CD4-positive, alpha-beta T cell (primary cell): ENCODE measurements at regions of chrX and their contacts with region 1.

Region 1: DNA sequence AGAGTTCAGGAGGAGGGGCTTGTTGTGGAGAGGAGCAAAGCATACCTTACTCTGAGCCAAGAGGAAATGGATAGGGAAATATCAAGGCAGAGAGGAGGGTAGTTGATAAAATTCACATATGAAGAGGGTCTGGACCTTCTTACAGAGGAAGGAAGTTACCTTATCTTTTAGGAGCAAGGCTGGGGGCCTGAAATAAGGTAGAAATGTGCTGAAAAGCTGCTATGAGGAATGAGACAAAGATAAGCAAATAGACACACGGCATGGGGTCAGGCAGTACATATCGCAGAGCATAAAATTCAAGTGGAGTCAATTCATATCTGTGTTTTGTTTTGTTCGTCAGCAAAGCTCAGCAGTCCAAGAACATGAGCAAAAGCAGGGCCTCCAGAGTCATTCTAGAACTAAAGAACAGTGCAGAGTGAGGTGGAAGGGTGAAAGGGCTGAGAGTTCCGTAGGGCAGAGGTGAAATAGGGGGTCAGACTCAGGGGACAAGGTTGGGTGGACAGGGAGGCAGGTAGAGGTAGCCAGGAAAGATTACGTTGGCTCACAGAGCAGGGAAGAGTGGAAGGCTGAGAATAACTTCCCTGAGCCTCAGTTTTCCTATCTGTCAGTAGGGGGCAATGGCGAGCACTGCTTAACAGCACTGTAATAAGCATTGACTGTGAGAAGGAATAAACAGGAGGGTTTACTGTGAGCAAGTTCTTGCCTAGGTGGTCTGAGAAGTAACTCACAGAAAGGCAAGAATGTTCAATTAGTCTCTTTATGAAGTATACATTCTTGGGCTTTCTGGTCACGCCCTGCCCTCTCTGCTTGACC is 9.2 kb downstream of the VSIG4 start:
- DNase-seq: peak in 4 of 14 experiments; percentile 45 to 60 (median 56)
- ATAC-seq: peak; percentile 59
- H3K4me3 ChIP-seq: no peak overlapping the region
- H3K4me3 Mint-ChIP-seq: no peak overlapping the region
- H3K27ac ChIP-seq: no peak overlapping the region
- H3K27ac Mint-ChIP-seq: no peak overlapping the region
- H3K4me1 ChIP-seq: peaks cover 6% of the 10 kb centered on the region
- H3K4me1 Mint-ChIP-seq: peaks cover 4% of the 10 kb centered on the region
- H3K27me3 ChIP-seq: no peaks in the 10 kb centered on the region
- H3K27me3 Mint-ChIP-seq: no peaks in the 10 kb centered on the region
- CTCF ChIP-seq: peak; percentile 51

Region 2: DNA sequence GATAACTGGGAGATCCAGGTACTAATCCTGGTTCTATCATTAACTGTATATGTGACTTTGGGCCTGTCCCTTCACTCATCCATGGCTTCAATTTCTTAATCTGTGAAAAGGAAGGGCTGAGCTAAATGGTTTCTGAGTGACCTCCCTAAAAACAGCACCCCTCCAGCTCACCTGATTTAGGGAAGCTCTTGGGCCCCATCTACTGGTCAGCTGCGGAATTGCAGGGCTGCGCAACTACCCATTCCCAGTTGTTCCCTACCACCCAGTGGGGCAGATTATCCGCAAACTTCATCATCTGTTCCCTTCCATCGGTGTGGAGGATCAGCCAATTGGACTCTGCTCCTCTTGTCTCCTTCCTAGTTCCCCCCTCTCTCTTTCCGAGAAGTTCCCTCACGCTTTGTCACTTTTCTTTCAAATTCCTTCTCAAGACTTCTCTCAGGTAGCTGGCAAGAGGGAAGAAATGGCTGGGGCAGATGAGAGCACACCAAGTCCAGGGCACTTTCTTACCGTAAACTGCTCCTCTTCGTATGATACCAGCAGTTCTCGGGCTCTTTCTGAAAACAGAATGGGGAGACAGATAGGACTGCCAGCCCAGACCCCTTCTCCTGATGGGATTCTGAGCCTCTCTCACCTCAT is 501.9 kb before region 1 on chrX:
- CTCF ChIA-PET with region 1: no interaction called
- POLR2A ChIA-PET with region 1: no interaction called
- intact Hi-C with region 1: no loop called
- DNase-seq: peak; percentile 19 to 75 (median 42)
- ATAC-seq: peak; percentile 60
- H3K4me3 ChIP-seq: no peak overlapping the region
- H3K4me3 Mint-ChIP-seq: peak overlapping the region; percentile 8
- H3K27ac ChIP-seq: no peak overlapping the region
- H3K27ac Mint-ChIP-seq: no peak overlapping the region
- H3K4me1 ChIP-seq: peaks cover 10% of the 10 kb centered on the region
- H3K4me1 Mint-ChIP-seq: peaks cover 22% of the 10 kb centered on the region
- H3K27me3 ChIP-seq: no peaks in the 10 kb centered on the region
- H3K27me3 Mint-ChIP-seq: no peaks in the 10 kb centered on the region
- CTCF ChIP-seq: peak; percentile 85

Region 3: DNA sequence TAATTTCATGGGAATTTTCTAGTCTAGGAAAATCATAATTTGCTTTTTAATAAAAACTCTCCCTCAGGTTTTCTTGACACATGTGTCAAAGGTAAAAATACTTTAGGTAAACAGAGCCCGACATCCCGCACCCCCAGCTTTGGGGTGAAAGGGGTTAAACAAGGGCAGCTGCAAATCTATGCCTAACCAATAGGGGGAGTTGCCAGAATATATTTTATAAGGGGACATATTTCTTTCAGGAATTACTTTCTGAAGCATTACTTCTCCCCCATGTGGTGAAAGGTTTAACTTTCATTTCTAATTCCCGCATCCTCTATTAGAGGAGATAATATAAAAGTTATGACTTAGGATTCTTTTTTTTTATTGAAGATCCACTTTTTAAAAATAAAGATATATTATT is 79.4 kb after region 1 on chrX:
- CTCF ChIA-PET with region 1: no interaction called
- POLR2A ChIA-PET with region 1: no interaction called
- intact Hi-C with region 1: loop called in 1 of 2 experiments (anchors 5 kb)
- DNase-seq: peak in 5 of 14 experiments; percentile 0 to 52 (median 18)
- ATAC-seq: no peak
- H3K4me3 ChIP-seq: no peak overlapping the region
- H3K4me3 Mint-ChIP-seq: no peak overlapping the region
- H3K27ac ChIP-seq: no peak overlapping the region
- H3K27ac Mint-ChIP-seq: no peak overlapping the region
- H3K4me1 ChIP-seq: peaks cover 4% of the 10 kb centered on the region
- H3K4me1 Mint-ChIP-seq: peaks cover 13% of the 10 kb centered on the region
- H3K27me3 ChIP-seq: no peaks in the 10 kb centered on the region
- H3K27me3 Mint-ChIP-seq: no peaks in the 10 kb centered on the region
- CTCF ChIP-seq: peak; percentile 54